ENCODE measurements at regions of chr7 and their contacts with region 1.

Region 1: DNA sequence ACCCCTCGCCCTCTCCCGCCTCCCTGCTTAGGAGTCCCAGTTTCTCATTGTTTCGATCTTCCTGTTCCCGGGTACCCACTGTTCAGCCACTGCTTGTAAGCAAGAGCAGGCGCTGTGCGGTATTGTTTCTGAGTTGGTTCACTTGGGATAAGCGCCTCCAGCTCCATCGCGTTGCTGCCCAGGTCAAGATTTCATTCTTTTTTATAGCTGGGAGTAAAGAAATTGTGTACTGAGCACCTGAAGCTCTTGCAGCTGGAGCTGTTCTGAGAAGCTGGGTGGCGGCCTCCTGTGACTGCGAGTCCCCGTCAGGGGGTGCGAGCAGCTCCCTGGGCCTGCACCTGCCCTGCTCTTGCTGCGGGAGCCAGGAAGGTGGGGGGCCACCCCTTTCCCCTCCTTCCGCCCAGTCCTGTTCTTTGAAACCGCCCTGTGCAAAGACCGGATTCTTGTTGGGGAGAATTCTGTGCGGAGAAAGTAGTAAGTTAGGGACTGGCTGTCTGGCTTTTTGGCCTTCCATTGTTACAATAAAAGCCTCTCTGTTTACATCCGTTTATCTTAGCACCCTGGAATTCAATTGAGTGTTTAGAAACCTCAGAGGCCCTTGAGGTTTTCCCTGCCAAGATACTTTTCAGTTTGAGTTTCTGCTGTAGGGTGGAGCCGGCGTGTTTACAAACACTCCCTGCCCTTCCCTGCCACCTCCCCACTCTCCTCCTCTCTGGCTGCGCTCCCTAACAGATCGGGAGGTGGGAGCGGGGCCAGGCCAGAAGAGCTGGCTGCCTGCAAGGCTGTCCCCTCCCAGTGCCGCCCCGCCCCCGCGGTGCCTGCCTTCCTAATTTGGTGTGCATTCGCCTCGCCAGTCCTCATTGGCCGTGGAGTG is 30.8 kb upstream of the AP5Z1 start:
- DNase-seq: peak; percentile 75
- ATAC-seq: peak; percentile 63
- H3K4me3 Mint-ChIP-seq: peak overlapping the region; percentile 82
- H3K27ac Mint-ChIP-seq: peak overlapping the region; percentile 97
- H3K4me1 Mint-ChIP-seq: peaks cover 67% of the 10 kb centered on the region
- H3K27me3 Mint-ChIP-seq: no peaks in the 10 kb centered on the region
- CTCF ChIP-seq: no peak

Region 2: GRCh38 chr7:4610768-4611467 is 133.7 kb before region 1 on chr7:
- CTCF ChIA-PET with region 1: interaction called, 10 read pairs
- POLR2A ChIA-PET with region 1: no interaction called
- intact Hi-C with region 1: no loop called
- DNase-seq: peak; percentile 61
- ATAC-seq: peak; percentile 82
- H3K4me3 Mint-ChIP-seq: no peak overlapping the region
- H3K27ac Mint-ChIP-seq: no peak overlapping the region
- H3K4me1 Mint-ChIP-seq: peaks cover 10% of the 10 kb centered on the region
- H3K27me3 Mint-ChIP-seq: no peaks in the 10 kb centered on the region
- CTCF ChIP-seq: peak; percentile 87

Region 3: DNA sequence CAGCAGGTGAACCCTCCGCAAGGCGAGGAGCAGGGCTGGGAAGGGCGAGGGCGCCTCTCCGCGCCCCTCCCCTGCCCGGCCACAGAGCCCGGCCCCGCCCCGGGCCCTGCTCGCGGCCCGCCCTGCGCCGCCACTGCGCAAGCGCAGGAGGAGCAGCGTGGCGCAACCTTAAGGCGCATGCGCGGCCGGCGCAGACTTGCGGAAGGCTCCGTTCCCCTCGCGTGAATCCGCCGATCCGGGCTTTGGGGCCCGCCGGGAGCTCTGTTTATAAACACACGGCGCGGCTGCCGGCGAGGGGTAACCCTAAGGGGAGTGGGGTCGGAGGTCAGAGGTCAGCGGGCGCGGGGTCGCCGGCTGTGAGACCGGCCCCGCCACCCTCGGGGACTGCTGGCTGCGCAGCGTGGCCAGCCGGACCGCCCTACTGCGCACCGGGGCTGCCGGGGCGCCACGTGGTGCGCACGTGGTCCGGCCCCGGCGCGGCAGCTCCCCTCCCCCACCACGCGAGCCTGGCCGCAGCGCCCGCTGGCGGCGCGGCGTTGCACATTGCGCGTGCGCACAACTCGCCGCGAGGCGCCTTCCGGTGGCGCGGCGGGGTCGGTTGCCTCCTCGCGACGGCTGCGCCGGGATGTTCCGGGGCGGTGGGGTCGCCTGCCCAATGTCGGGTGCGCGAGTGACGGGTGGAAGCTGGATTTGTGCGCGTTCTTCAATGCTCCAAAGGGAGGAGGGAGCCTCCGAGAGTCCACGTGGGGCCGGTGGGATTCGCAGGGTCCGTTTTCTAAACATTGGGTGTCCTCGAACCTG is 102.8 kb before region 1 on chr7:
- CTCF ChIA-PET with region 1: interaction called, 10 read pairs
- POLR2A ChIA-PET with region 1: interaction called, 3 read pairs
- intact Hi-C with region 1: no loop called
- DNase-seq: peak; percentile 97
- ATAC-seq: peak; percentile 91
- H3K4me3 Mint-ChIP-seq: peak overlapping the region; percentile 90
- H3K27ac Mint-ChIP-seq: peak overlapping the region; percentile 92
- H3K4me1 Mint-ChIP-seq: peaks cover 5% of the 10 kb centered on the region
- H3K27me3 Mint-ChIP-seq: no peaks in the 10 kb centered on the region
- CTCF ChIP-seq: no peak

Region 4: GRCh38 chr7:4681886-4682620 is 62.6 kb before region 1 on chr7 and contains the start of gene FOXK1:
- CTCF ChIA-PET with region 1: interaction called, 5 read pairs
- POLR2A ChIA-PET with region 1: interaction called, 4 read pairs
- intact Hi-C with region 1: loop called (anchors 5 kb)
- DNase-seq: peak; percentile 78
- ATAC-seq: peak; percentile 87
- H3K4me3 Mint-ChIP-seq: peak within 1 kb of the TSS; percentile 89
- H3K27ac Mint-ChIP-seq: peak within 1 kb of the TSS; percentile 97
- H3K4me1 Mint-ChIP-seq: peaks cover 25% of the 10 kb centered on the region
- H3K27me3 Mint-ChIP-seq: no peaks in the 10 kb centered on the region
- CTCF ChIP-seq: no peak
- total RNA-seq, gene FOXK1: 38.5 to 39.6 TPM

Region 5: GRCh38 chr7:4775250-4775847 is 30.7 kb after region 1 on chr7 and contains the start of gene AP5Z1:
- CTCF ChIA-PET with region 1: interaction called, 3 read pairs
- POLR2A ChIA-PET with region 1: interaction called, 12 read pairs
- intact Hi-C with region 1: no loop called
- DNase-seq: peak; percentile 97
- ATAC-seq: peak; percentile 96
- H3K4me3 Mint-ChIP-seq: peak within 1 kb of the TSS; percentile 99
- H3K27ac Mint-ChIP-seq: peak within 1 kb of the TSS; percentile 98
- H3K4me1 Mint-ChIP-seq: peaks cover 36% of the 10 kb centered on the region
- H3K27me3 Mint-ChIP-seq: no peaks in the 10 kb centered on the region
- CTCF ChIP-seq: no peak
- total RNA-seq, gene AP5Z1: 21.2 to 21.3 TPM

Measured in activated CD8-positive, alpha-beta T cell treated with anti-CD3 and anti-CD28 coated beads for 36 hours (primary cell).